ENCODE measurements at regions of chr17 and their contacts with region 1.

Region 1: DNA sequence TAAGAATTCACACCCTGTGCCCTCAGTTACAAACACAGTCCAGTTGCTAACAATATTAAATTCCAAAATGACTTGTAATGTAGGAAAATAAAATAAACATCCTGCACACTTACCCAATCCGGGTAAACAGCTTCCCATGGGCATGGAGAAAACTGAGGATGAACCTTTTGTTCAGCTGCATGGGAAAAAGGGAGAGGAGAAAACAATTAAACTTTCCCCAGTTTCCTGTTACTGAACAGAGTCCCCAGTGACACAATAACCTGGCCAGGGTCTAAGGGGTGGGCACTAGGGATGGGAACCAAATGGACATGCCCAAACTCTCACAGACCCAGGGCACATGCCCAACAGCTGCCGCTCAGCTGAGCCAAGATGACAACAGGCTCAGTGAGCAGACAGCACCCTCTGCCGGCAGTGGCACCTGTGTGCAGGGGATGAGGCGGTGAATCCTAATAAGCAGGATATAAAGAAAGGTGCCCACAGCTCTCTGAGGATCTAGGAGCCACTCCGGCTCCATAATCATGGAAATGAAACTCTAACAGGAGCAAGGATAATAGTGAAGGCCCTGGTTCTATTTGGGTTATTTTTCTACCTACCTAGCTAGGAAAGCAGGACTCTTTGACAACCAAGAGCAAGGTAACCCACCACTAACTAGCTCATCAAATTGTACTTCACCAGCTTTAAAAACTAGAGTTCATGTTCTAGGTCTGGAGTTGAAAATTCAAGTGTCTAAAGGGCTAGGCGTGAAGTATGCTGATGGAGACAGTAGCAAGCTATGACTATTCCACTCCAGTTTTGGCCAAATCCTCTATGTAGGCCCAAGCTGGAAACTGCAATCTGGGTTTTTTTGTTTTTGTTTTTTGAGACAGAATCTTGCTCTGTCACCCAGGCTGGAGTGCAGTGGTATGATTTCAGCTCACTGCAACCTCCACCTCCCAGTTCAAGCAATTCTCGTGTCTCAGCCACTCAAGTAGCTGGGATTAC is 58.8 kb downstream of the SMG6 start:
- DNase-seq: no peak
- H3K4me3 ChIP-seq: no peak overlapping the region
- CTCF ChIP-seq: peak; percentile 97

Region 2: GRCh38 chr17:1972487-1973160 is 272.2 kb before region 1 on chr17:
- CTCF ChIA-PET with region 1: no interaction called
- POLR2A ChIA-PET with region 1: no interaction called
- DNase-seq: no peak
- H3K4me3 ChIP-seq: no peak overlapping the region
- CTCF ChIP-seq: no peak

Region 3: DNA sequence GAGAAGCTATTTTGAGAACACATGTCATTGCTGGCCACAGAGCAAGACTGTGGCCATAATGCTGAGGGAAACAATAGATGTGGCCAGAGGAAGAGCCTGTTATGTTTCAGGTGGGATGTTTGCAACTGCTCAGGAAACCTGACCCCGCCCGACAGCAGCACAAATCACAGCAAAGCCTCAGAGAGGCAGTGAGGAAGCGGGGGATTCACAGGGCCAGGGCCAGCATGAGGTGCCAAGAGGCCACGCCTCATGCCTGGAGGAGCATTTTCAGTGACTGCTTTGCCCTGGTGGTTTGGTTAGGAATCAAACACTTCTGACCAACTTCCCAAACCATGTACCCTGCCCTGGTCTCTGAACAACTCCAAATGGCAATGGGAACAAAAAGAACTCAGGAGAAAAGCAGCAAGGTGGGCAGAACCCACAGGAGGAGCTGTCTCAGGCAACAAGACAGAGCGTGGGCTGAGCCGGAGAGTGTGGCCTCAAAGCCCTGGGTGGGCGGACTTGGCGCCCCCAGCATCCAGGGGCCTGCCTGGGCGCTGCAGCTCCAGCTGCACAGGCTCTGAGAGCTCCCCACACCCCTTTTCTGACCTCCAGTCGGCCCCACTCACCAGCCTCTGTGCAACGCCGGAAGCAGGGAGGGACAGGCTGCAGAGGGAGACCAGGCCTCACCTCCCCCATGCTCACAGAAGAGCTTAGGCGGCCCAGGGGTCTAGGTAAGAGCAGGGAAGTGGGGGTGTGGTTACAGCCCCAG is 169.3 kb before region 1 on chr17:
- CTCF ChIA-PET with region 1: interaction called, 11 read pairs
- POLR2A ChIA-PET with region 1: no interaction called
- DNase-seq: no peak
- H3K4me3 ChIP-seq: no peak overlapping the region
- CTCF ChIP-seq: no peak

Region 4: GRCh38 chr17:2122641-2123302 is 122.1 kb before region 1 on chr17:
- CTCF ChIA-PET with region 1: interaction called, 15 read pairs
- POLR2A ChIA-PET with region 1: no interaction called
- DNase-seq: no peak
- H3K4me3 ChIP-seq: no peak overlapping the region
- CTCF ChIP-seq: no peak

Region 5: GRCh38 chr17:2215616-2216364 is 29.0 kb before region 1 on chr17:
- CTCF ChIA-PET with region 1: interaction called, 18 read pairs
- POLR2A ChIA-PET with region 1: no interaction called
- DNase-seq: no peak
- H3K4me3 ChIP-seq: peak overlapping the region; percentile 42
- CTCF ChIP-seq: no peak

Region 6: GRCh38 chr17:2266045-2266864 is 21.4 kb after region 1 on chr17:
- CTCF ChIA-PET with region 1: interaction called, 11 read pairs
- POLR2A ChIA-PET with region 1: interaction called, 4 read pairs
- DNase-seq: no peak
- H3K4me3 ChIP-seq: no peak overlapping the region
- CTCF ChIP-seq: no peak

Region 7: DNA sequence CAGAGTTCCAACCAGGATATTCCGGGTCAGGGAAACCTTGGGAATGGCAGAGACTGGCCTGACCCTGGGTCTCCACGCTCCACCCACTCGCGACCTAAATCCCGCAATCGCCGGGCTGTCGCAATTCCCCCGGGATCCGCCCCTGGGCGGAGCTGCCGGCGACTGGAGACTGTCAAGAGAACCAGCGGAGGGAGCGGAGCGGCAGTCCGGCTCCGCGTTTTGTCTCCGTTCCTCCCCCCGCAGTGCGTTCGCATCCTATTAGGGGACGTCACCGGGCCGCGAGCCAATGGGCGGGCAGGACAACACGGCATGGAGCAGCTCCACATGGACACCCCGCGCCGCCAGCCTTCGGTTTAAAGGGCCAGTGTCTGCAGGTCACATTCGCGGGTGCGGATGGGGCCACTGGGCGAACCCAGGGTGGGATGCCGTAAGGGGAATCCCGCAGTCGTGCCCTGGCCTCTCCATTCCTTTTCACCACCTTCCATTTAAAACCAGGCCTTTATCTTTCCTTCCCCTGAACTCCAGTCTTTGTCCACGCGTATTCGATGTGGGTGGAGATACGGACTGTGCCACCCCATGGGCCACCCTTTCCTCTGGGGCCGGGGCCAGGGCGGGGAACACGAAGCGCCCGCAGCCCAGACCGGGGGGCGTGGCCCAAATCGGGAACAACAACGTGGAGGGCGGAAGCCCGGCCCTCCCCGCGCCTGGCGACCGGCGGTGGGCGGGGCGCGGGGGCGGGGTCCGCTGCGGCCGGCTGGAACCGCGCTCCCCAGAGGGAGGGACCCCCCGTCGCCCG is 156.8 kb after region 1 on chr17:
- CTCF ChIA-PET with region 1: no interaction called
- POLR2A ChIA-PET with region 1: no interaction called
- DNase-seq: peak; percentile 97
- H3K4me3 ChIP-seq: peak overlapping the region; percentile 67
- CTCF ChIP-seq: no peak